ENCODE measurements at regions of chr5 and their contacts with region 1.

Region 1: GRCh38 chr5:32400401-32400800 is 44.1 kb downstream of the ZFR start:
- DNase-seq: no peak
- ATAC-seq: no peak
- H3K4me3 ChIP-seq: no peak overlapping the region
- H3K27ac ChIP-seq: no peak overlapping the region
- H3K4me1 ChIP-seq: peaks cover 10% of the 10 kb centered on the region; the same call in 1 of the 2 replicates
- H3K27me3 ChIP-seq: no peaks in the 10 kb centered on the region
- CTCF ChIP-seq: no peak
- EP300 ChIP-seq: no peak
- POLR2A ChIP-seq: no peak
- RAD21 ChIP-seq: no peak

Region 2: GRCh38 chr5:32462618-32463017 is 62.2 kb after region 1 on chr5:
- CTCF ChIA-PET with region 1: no interaction called
- POLR2A ChIA-PET with region 1: no interaction called
- in situ Hi-C with region 1: no loop called
- intact Hi-C with region 1: no loop called
- DNase-seq: no peak
- ATAC-seq: no peak
- H3K4me3 ChIP-seq: no peak overlapping the region
- H3K27ac ChIP-seq: no peak overlapping the region
- H3K4me1 ChIP-seq: peaks cover 19% of the 10 kb centered on the region
- H3K27me3 ChIP-seq: peaks cover under 1 to 2% of the 10 kb centered on the region in 2 experiments; a peak in 2 of 5 replicates
- CTCF ChIP-seq: no peak
- EP300 ChIP-seq: no peak
- POLR2A ChIP-seq: no peak
- RAD21 ChIP-seq: no peak

Region 3: GRCh38 chr5:32522429-32523143 is 122.2 kb after region 1 on chr5:
- CTCF ChIA-PET with region 1: no interaction called
- POLR2A ChIA-PET with region 1: no interaction called
- in situ Hi-C with region 1: no loop called
- intact Hi-C with region 1: no loop called
- DNase-seq: no peak
- ATAC-seq: no peak
- H3K4me3 ChIP-seq: no peak overlapping the region
- H3K27ac ChIP-seq: no peak overlapping the region
- H3K4me1 ChIP-seq: peaks cover 25% of the 10 kb centered on the region
- H3K27me3 ChIP-seq: no peaks in the 10 kb centered on the region
- CTCF ChIP-seq: no peak
- EP300 ChIP-seq: no peak
- POLR2A ChIP-seq: no peak
- RAD21 ChIP-seq: no peak

Region 4: DNA sequence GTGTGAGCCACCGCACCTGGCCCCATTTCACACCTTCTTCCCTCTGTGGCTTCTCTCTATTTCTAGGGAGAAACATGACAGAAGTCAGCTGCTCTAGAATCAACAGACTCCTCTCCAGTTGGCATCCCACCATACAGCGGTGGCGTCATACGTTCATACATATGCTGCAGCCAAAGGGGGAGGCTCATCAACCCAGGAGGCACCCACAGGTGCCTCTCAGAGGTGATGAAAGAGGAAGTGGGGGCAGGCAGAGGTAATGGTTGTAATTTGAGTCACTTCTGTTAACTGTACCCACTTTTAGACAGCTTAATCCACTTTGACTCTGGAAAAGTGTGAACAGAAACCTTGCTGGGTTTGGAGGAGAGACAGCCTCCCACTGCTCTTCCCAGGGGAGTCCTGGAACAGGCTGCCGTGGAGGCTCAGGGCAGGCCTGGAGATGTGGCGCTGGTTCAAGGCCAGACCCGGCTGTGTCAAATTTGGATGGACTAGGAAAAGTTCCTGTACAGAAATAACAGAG is 137.7 kb after region 1 on chr5:
- CTCF ChIA-PET with region 1: no interaction called
- POLR2A ChIA-PET with region 1: no interaction called
- in situ Hi-C with region 1: no loop called
- intact Hi-C with region 1: no loop called
- DNase-seq: no peak
- ATAC-seq: no peak
- H3K4me3 ChIP-seq: no peak overlapping the region
- H3K27ac ChIP-seq: no peak overlapping the region
- H3K4me1 ChIP-seq: peaks cover 48% of the 10 kb centered on the region
- H3K27me3 ChIP-seq: no peaks in the 10 kb centered on the region
- CTCF ChIP-seq: no peak
- EP300 ChIP-seq: no peak
- POLR2A ChIP-seq: no peak
- RAD21 ChIP-seq: no peak

Region 5: DNA sequence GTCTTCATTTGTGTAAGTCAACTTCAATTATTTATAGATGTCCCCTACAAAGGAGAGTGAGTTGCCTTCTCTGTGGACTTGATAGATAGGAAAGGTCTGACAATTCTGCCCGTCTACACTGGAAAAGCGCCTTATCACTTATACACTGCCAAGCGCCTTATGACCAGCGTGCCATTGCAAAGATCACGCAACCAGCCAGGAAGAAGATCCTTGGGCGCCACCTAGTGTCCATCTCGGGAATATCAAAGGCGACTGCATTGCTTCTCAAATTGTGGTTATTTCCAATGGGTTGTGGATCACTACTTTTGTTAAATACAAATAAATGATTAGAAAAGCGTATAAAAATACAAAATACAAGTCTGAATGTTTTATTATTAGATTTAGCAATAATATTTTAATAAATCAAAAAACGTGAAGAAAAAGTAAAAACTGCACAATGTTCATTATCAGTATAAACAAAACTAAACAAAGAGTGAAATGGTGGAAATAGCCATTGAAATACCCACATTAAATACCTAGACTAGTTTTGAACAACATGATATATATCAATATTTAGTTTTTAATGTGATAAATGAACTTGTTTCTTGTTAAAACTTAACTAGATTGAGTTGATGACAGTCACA is 212.8 kb after region 1 on chr5:
- CTCF ChIA-PET with region 1: no interaction called
- POLR2A ChIA-PET with region 1: no interaction called
- in situ Hi-C with region 1: no loop called
- intact Hi-C with region 1: loop called (anchors 2 kb)
- DNase-seq: peak; percentile 66
- ATAC-seq: peak; percentile 65
- H3K4me3 ChIP-seq: no peak overlapping the region
- H3K27ac ChIP-seq: no peak overlapping the region
- H3K4me1 ChIP-seq: no peaks in the 10 kb centered on the region
- H3K27me3 ChIP-seq: no peaks in the 10 kb centered on the region
- CTCF ChIP-seq: peak; percentile 89
- EP300 ChIP-seq: 0 out of 4 replicates have a peak, but pooled peaks of 1 of the 2 experiments have one; percentile 8
- POLR2A ChIP-seq: no peak
- RAD21 ChIP-seq: peak; percentile 86

Measured in HepG2 (cell line).